ENCODE measurements at regions of chr1 and their contacts with region 1.

Region 1: DNA sequence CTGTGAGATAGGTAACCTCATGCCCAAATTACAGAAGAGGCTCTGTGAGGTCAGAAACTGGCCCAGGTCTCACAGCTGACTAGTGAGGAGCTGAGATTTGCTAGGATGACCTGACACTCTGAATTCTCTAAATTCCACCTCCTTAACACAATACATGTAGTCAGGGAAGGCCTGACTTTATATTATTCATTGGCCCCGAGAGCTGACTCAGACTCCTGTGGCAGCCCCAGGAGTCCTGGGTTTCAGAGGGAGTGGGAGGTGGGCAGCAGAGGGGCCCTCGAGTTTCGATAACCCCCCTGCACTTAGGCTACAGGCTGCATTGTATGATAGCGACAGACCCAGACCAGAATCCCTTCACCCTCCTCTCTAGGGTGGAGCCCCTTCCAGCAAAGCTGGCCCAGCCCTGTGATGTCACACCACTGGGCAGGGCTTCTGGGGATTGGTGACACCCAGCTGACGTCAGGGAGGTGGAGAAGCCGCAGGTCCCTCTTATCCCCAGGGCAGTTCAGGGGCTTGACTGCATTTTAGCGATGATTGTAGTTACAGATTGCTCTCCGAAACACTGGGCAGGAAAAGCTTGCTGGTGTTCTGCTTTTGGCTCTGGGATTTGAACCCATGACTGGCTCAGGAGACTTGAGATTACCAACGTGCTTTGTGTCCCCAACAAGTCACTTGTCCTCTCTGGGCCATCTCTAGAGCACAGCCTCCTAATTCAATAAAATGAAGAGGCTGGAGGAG is 17.0 kb upstream of the GPR37L1 start:
- DNase-seq: peak; percentile 93
- H3K4me3 ChIP-seq: no peak overlapping the region
- H3K27ac ChIP-seq: peak overlapping the region; percentile 65
- H3K4me1 ChIP-seq: peaks cover 25% of the 10 kb centered on the region
- H3K27me3 ChIP-seq: no peaks in the 10 kb centered on the region
- CTCF ChIP-seq: no peak

Region 2: GRCh38 chr1:201828820-201829774 is 276.6 kb before region 1 on chr1 and contains the start of gene IPO9:
- CTCF ChIA-PET with region 1: no interaction called
- dilution Hi-C with region 1: no loop called
- in situ Hi-C with region 1: no loop called
- intact Hi-C with region 1: no loop called
- DNase-seq: peak; percentile 90
- H3K4me3 ChIP-seq: peak within 1 kb of the TSS; percentile 74 to 90 (median 79)
- H3K27ac ChIP-seq: peak within 1 kb of the TSS; percentile 67
- H3K4me1 ChIP-seq: peaks cover 8% of the 10 kb centered on the region
- H3K27me3 ChIP-seq: no peaks in the 10 kb centered on the region
- CTCF ChIP-seq: peak; percentile 84 to 88
- total RNA-seq, gene IPO9: 22.7 to 61.3 TPM

Region 3: GRCh38 chr1:201859424-201859823 is 246.3 kb before region 1 on chr1:
- CTCF ChIA-PET with region 1: no interaction called
- dilution Hi-C with region 1: no loop called
- in situ Hi-C with region 1: no loop called
- intact Hi-C with region 1: no loop called
- DNase-seq: no peak
- H3K4me3 ChIP-seq: no peak overlapping the region
- H3K27ac ChIP-seq: no peak overlapping the region
- H3K4me1 ChIP-seq: no peaks in the 10 kb centered on the region
- H3K27me3 ChIP-seq: no peaks in the 10 kb centered on the region
- CTCF ChIP-seq: no peak

Region 4: DNA sequence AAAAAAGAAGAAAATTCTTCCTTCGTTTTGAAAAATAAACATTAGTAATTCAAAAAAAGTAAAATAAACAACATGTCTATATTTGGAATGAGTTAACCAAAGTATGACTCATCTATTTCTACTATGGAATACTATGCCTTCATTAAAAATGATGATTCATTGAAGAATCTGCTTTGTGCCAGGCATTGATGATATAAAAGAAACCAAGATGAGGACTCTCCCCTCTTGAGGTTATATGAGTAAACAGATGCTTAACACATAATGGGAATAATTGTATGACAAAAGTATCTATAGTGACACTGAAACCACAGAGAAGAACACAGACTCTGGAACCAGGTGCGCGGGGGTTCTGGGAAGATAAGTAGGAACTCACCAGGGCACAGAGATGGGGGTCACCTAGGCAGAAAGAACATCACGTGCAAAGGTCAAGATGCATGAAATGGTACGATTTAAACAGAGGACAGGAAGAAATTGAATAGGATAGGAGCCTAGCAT is 76.5 kb before region 1 on chr1:
- CTCF ChIA-PET with region 1: no interaction called
- dilution Hi-C with region 1: loop called (anchors 10 kb)
- in situ Hi-C with region 1: no loop called
- intact Hi-C with region 1: no loop called
- DNase-seq: peak; percentile 96
- H3K4me3 ChIP-seq: no peak overlapping the region
- H3K27ac ChIP-seq: peak overlapping the region; percentile 87
- H3K4me1 ChIP-seq: peaks cover 12% of the 10 kb centered on the region
- H3K27me3 ChIP-seq: no peaks in the 10 kb centered on the region
- CTCF ChIP-seq: no peak

Region 5: DNA sequence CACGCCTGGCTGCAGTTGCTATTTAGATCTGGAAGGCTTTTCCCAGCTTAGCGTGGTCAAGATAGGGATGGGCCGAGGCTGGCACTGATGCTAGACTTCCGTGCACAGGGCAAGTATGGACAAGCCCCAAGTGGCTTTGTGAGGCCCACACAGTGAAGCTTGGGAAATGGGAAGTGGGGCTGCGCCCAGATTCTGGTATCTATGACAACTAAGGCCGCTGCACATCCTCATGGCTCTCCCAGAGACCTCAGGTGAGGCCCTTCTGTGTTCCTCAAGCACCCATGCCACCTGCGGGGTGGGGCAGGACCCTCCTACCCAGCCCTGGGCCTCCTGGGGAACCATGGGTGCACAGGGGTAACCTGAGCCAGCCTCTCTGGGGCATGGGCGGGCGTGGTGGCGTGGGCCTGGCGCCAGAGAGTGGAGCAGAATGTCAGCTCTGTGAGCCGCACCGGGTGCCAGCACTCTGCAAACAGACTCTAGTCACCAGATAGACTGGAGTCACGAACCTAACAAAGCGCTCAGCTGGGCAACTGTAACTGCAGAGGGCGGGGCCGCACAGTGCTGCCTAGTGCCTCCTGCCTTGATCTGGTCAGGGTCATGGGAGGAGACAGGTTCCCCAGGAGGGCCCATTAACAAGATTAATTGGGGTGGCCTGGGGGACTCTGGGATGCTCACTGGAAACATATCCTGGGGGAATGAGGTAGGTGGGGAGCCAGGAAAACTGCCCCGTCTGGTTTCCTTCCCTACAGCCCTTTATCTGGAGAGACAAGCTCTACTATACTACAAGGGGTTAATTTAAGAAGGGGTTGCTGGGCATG is 48.9 kb before region 1 on chr1:
- CTCF ChIA-PET with region 1: no interaction called
- dilution Hi-C with region 1: loop called (anchors 5 kb)
- in situ Hi-C with region 1: no loop called
- intact Hi-C with region 1: no loop called
- DNase-seq: peak; percentile 96
- H3K4me3 ChIP-seq: no peak overlapping the region
- H3K27ac ChIP-seq: peak overlapping the region; percentile 92
- H3K4me1 ChIP-seq: peaks cover 19% of the 10 kb centered on the region
- H3K27me3 ChIP-seq: no peaks in the 10 kb centered on the region
- CTCF ChIP-seq: no peak

Region 6: GRCh38 chr1:202069662-202070061 is 36.0 kb before region 1 on chr1:
- CTCF ChIA-PET with region 1: no interaction called
- dilution Hi-C with region 1: no loop called
- in situ Hi-C with region 1: no loop called
- intact Hi-C with region 1: no loop called
- DNase-seq: no peak
- H3K4me3 ChIP-seq: no peak overlapping the region
- H3K27ac ChIP-seq: no peak overlapping the region
- H3K4me1 ChIP-seq: no peaks in the 10 kb centered on the region
- H3K27me3 ChIP-seq: no peaks in the 10 kb centered on the region
- CTCF ChIP-seq: no peak

Measured in mammary epithelial cell (primary cell).